Caco-2 (cell line): ENCODE measurements at regions of chr6 and their contacts with region 1.

Region 1: GRCh38 chr6:37169496-37170272 is at the start of gene PIM1:
- DNase-seq: peak; percentile 97 to 99
- H3K4me3 ChIP-seq: peak within 1 kb of the TSS; percentile 82
- H3K4me3 Mint-ChIP-seq: peak within 1 kb of the TSS; percentile 88
- H3K27ac Mint-ChIP-seq: peak within 1 kb of the TSS; percentile 98
- H3K4me1 ChIP-seq: peaks cover 10% of the 10 kb centered on the region; the same call in 1 of the 2 replicates
- H3K4me1 Mint-ChIP-seq: peaks cover 14% of the 10 kb centered on the region
- H3K27me3 ChIP-seq: no peaks in the 10 kb centered on the region
- H3K27me3 Mint-ChIP-seq: no peaks in the 10 kb centered on the region
- CTCF ChIP-seq: no peak
- total RNA-seq, gene PIM1: 43.8 and 48.3 TPM in 2 replicates

Region 2: DNA sequence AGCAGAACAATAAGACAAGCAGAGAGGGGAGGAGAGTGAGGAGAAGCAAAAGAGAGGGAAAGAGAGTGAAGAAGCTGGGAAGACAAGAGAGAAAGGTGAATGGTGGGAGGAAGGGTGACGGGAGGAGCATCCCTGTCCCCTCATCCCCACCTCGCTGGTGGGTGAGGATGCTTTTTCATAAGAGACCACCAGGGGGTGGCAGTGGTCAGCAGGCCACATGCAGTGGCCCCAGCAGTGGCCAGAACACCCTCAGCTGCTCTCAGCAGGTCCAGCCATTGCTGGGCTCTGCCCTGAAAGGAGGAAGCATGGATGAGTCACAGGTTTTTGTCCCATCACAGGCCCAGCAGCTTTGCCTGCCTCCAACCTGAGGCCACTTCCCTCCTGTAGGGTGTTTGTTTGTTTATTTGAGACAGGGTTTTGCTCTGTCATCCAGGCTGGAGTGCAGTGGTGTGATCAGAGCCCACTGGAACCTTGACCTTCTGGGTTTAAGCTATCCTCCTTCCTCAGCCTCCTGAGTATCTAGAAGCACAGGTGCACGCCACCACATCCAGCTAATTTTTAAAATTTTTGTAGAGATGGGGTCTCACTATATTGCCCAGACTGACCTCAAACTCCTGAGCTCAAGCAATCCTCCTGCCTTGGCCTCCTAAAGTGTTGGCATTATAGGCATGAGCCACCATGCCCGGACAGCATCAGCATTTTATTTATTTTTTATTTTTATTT is 140.3 kb before region 1 on chr6:
- CTCF ChIA-PET with region 1: interaction called, 6 read pairs
- POLR2A ChIA-PET with region 1: no interaction called
- intact Hi-C with region 1: loop called (anchors 1 kb)
- DNase-seq: peak; percentile 78 to 80
- H3K4me3 ChIP-seq: no peak overlapping the region
- H3K4me3 Mint-ChIP-seq: no peak overlapping the region
- H3K27ac Mint-ChIP-seq: no peak overlapping the region
- H3K4me1 ChIP-seq: no peaks in the 10 kb centered on the region
- H3K4me1 Mint-ChIP-seq: peaks cover 7% of the 10 kb centered on the region
- H3K27me3 ChIP-seq: no peaks in the 10 kb centered on the region
- H3K27me3 Mint-ChIP-seq: no peaks in the 10 kb centered on the region
- CTCF ChIP-seq: peak; percentile 77 to 78

Region 3: GRCh38 chr6:37059344-37060206 is 110.1 kb before region 1 on chr6:
- CTCF ChIA-PET with region 1: interaction called, 4 read pairs
- POLR2A ChIA-PET with region 1: no interaction called
- intact Hi-C with region 1: loop called (anchors 1 kb)
- DNase-seq: peak; percentile 87 to 89
- H3K4me3 ChIP-seq: no peak overlapping the region
- H3K4me3 Mint-ChIP-seq: peak overlapping the region; percentile 34
- H3K27ac Mint-ChIP-seq: peak overlapping the region; percentile 95
- H3K4me1 ChIP-seq: peaks cover 22% of the 10 kb centered on the region
- H3K4me1 Mint-ChIP-seq: peaks cover 18% of the 10 kb centered on the region
- H3K27me3 ChIP-seq: no peaks in the 10 kb centered on the region
- H3K27me3 Mint-ChIP-seq: no peaks in the 10 kb centered on the region
- CTCF ChIP-seq: peak; percentile 57 to 88

Region 4: DNA sequence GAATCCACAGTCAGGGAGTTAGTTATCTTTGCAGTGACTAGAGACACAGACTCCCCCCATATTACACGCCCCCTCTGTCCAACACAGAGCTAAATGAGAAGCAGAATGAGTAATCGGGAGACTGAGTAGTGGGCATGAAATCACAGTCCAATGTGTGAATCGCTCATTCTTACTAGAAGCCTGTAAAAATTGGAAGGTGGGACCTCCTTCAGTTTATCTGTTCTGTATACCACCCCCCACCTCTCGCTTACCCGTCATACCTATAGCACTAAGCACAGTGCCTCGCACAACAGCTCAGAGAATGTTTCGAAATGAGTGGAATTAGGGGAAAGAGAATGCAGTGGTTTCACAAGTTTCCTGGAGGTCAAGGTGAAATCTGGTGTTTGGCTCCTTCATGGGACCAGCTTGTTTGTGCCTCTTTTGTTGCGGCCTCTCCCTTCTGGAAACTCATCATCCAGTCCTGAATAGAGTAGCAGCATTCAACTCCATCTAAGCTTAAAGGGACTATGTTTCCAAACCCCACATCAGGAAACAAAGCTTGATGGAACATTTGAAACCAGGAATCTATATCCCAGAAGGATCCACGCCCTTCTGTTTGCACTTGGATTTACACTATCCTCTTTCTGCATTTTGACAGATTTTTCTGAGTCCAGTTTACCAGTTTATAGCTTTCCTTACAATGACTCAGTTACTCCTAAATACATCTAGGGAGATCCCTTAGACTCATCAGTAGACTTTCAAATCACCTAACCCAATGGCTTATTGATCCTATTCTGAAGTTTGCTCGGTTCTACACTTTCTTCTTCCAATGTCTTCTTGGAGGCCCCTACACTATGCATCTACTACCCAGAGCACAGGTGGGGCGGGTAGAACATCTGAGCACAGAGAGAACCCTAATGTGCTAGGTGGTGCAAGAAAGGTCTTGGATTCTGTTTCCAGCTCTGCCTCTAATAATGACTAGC is 58.9 kb before region 1 on chr6:
- CTCF ChIA-PET with region 1: interaction called, 8 read pairs
- POLR2A ChIA-PET with region 1: interaction called, 14 read pairs
- intact Hi-C with region 1: no loop called
- DNase-seq: peak in 1 of 2 experiments; percentile 43
- H3K4me3 ChIP-seq: no peak overlapping the region
- H3K4me3 Mint-ChIP-seq: peak overlapping the region; percentile 32
- H3K27ac Mint-ChIP-seq: peak overlapping the region; percentile 67
- H3K4me1 ChIP-seq: peaks cover 45% of the 10 kb centered on the region
- H3K4me1 Mint-ChIP-seq: peaks cover 36% of the 10 kb centered on the region
- H3K27me3 ChIP-seq: no peaks in the 10 kb centered on the region
- H3K27me3 Mint-ChIP-seq: no peaks in the 10 kb centered on the region
- CTCF ChIP-seq: no peak

Region 5: GRCh38 chr6:37137201-37138090 is 32.2 kb before region 1 on chr6:
- CTCF ChIA-PET with region 1: interaction called, 4 read pairs
- POLR2A ChIA-PET with region 1: interaction called, 10 read pairs
- intact Hi-C with region 1: loop called (anchors 1 kb)
- DNase-seq: peak; percentile 88 to 90
- H3K4me3 ChIP-seq: peak overlapping the region; percentile 47
- H3K4me3 Mint-ChIP-seq: peak overlapping the region; percentile 96
- H3K27ac Mint-ChIP-seq: peak overlapping the region; percentile 100
- H3K4me1 ChIP-seq: peaks cover 62% of the 10 kb centered on the region
- H3K4me1 Mint-ChIP-seq: peaks cover 52% of the 10 kb centered on the region
- H3K27me3 ChIP-seq: no peaks in the 10 kb centered on the region
- H3K27me3 Mint-ChIP-seq: no peaks in the 10 kb centered on the region
- CTCF ChIP-seq: no peak